GM10248 (cell line): ENCODE measurements at regions of chr3 and their contacts with region 1.

Region 1: GRCh38 chr3:36957862-36958686 is 13.2 kb upstream of the TRANK1 start:
- DNase-seq: no peak
- CTCF ChIP-seq: no peak

Region 2: GRCh38 chr3:36792342-36792741 is 165.7 kb before region 1 on chr3:
- CTCF ChIA-PET with region 1: interaction called, 26 read pairs
- POLR2A ChIA-PET with region 1: no interaction called
- DNase-seq: peak; percentile 31
- CTCF ChIP-seq: peak; percentile 51

Region 3: GRCh38 chr3:36876181-36876936 is 81.7 kb before region 1 on chr3:
- CTCF ChIA-PET with region 1: interaction called, 15 read pairs
- POLR2A ChIA-PET with region 1: no interaction called
- DNase-seq: peak; percentile 77
- CTCF ChIP-seq: no peak

Region 4: GRCh38 chr3:36904641-36905040 is 53.4 kb before region 1 on chr3:
- CTCF ChIA-PET with region 1: interaction called, 62 read pairs
- POLR2A ChIA-PET with region 1: interaction called, 6 read pairs
- DNase-seq: no peak
- CTCF ChIP-seq: peak; percentile 60

Region 5: GRCh38 chr3:36923523-36923943 is 34.5 kb before region 1 on chr3:
- CTCF ChIA-PET with region 1: interaction called, 33 read pairs
- POLR2A ChIA-PET with region 1: no interaction called
- DNase-seq: no peak
- CTCF ChIP-seq: peak; percentile 40

Region 6: DNA sequence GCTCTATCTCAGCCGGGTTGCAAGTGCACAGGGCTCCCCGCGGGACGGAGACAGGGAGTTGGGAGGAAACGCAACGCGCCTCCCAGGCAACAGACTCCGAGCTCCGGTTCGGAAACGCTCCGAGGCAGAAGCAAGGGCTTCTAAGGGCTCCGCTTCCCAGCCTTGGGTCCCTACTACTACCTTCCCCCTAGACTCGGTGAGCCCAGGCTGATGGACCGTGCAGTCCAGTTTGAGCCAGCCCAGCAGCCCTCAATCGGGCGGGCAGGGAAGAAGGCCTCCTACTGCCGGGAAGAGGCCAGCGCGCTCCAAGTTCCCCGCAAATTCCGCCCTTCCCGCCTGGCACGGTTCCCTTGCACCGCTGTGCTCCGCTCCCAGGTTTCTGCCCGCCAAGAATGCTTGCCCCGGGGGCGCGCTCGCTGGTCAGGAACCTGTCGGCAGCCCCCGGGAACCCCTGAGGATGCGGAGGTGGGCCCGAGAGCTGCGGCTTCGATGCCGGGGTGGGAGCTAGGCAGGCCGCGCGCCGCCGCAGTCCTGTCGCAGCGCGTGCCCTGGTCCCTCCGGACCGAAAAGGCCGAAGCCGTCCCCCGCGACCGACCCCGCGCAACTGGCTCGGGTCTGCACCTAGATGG is 13.9 kb before region 1 on chr3:
- CTCF ChIA-PET with region 1: interaction called, 37 read pairs
- POLR2A ChIA-PET with region 1: no interaction called
- DNase-seq: peak; percentile 53
- CTCF ChIP-seq: peak; percentile 6

Region 7: GRCh38 chr3:36988356-36988755 is 30.3 kb after region 1 on chr3:
- CTCF ChIA-PET with region 1: interaction called, 23 read pairs
- POLR2A ChIA-PET with region 1: no interaction called
- DNase-seq: no peak
- CTCF ChIP-seq: no peak